Right ventricle myocardium inferior (tissue), 1 donor: ENCODE measurements at regions of chr7 and their contacts with region 1.

Region 1: GRCh38 chr7:150962553-150963399 is 15.3 kb downstream of the KCNH2 start:
- DNase-seq: peak; percentile 82
- ATAC-seq: peak; percentile 49

Region 2: GRCh38 chr7:150400008-150400787 is 562.6 kb before region 1 on chr7:
- intact Hi-C with region 1: no loop called
- DNase-seq: no peak
- ATAC-seq: no peak

Region 3: GRCh38 chr7:150876817-150877526 is 85.8 kb before region 1 on chr7:
- intact Hi-C with region 1: no loop called
- DNase-seq: no peak
- ATAC-seq: peak; percentile 91

Region 4: DNA sequence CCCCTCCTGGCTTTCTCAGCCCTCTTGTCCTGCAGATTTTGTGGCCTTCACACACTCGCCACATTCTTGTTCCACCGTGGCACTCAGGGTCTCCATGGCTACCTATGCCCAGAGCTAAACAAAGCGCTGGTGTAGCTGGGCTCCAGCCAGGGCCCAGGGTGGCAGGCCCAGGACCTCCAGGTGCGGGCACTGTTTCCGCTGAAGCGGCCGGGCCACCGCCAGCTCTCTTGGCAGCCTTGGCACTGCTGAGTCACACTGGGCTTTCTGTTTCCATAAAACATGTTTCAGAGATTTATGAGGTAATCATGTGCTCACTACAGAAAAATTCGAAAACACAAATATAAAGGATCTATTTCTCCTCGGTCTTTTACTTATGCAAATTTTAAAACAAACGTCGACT is 59.2 kb before region 1 on chr7:
- intact Hi-C with region 1: loop called (anchors 2 kb)
- DNase-seq: peak; percentile 85
- ATAC-seq: peak; percentile 91

Region 5: DNA sequence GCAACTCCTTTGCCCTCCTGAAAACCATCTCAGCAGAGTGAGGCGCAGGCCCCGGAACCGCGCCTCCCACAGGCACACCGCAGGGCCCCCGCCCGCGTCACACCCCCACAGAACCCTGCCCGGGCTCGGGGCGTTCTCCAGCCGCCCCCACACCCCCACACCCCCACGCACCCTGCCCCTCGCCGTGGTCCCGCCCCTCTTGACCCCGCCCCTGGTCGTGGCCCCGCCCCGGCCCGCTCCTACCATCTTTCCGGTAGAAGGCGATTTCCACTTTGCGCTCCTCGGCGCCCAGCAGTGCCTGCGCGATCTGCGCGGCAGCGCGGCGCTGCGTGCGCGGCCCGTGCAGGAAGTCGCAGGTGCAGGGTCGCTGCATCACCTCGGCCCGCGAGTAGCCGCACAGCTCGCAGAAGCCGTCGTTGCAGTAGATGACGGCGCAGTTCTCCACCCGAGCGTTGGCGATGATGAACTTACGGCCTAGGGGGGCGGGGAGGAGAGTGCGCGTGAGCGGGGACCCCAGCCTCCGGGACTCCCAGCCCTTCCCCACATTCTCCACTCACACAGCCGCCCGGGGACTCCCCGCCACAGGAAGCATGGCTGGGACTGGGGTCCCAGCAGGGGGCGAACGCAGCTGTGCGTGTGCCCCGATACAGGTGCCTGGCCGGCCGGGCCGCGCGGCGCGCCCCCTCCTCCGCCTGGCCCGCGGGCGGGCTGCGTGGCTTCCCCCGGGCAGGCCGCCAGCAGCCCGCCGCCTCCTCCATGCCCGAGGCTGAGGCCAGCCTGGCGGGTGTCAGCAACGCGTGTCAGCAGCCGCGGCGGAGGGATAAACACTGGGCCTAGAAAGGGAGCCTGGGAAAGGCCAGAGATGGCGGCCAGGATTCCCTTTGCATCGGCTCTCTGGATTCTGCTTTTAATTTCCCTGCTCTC is 12.0 kb after region 1 on chr7:
- intact Hi-C with region 1: loop called (anchors 1 kb)
- DNase-seq: peak; percentile 77
- ATAC-seq: no peak

Region 6: DNA sequence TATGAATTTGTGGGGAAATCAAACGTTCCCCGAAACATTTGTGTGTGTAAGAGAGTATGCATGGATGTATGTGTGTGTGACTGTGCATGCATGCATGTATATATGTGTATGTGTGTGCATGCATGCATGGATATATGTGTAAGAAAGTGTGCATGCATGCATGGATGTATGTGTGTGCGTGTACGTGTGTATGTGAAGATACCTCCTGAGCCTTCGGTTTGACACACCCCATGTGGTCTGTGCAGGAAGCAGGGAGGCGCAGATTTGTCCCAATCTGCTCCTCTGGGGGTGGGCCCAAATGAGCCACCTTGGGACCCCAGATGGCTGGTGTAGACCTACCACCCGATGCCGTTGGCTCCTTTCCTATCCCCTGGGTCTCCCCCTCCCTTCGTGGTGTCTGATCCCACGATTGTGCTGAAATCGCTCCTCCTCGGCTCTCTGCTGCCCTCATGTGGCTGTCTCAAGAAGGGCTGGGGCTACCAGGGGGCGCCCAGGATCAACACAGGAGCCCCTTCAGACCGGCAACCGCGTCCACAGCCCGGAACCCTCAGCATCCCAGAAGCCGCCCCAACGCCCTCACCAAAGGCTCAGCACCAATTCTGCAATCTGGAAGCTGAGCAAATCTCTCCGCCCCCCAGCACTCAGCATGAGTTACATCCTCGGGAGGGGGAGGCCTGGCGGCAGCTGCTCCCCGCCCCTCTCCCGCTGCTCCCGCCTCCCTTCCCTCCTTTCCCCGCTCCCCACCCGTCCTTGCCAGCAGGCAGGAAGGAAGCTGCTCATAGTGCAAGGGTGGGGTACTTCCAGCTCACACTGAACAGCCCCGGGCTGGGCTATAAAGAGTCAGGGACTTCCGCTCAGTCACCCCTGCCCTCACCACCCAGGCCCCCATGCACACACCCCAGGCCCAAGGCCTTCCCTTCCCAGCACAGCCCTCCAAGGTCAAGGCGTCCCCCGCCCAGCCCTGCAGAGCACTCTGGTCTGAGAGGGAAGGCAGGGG is 25.8 kb after region 1 on chr7:
- intact Hi-C with region 1: loop called (anchors 1 kb)
- DNase-seq: peak; percentile 78
- ATAC-seq: peak; percentile 47

Region 7: DNA sequence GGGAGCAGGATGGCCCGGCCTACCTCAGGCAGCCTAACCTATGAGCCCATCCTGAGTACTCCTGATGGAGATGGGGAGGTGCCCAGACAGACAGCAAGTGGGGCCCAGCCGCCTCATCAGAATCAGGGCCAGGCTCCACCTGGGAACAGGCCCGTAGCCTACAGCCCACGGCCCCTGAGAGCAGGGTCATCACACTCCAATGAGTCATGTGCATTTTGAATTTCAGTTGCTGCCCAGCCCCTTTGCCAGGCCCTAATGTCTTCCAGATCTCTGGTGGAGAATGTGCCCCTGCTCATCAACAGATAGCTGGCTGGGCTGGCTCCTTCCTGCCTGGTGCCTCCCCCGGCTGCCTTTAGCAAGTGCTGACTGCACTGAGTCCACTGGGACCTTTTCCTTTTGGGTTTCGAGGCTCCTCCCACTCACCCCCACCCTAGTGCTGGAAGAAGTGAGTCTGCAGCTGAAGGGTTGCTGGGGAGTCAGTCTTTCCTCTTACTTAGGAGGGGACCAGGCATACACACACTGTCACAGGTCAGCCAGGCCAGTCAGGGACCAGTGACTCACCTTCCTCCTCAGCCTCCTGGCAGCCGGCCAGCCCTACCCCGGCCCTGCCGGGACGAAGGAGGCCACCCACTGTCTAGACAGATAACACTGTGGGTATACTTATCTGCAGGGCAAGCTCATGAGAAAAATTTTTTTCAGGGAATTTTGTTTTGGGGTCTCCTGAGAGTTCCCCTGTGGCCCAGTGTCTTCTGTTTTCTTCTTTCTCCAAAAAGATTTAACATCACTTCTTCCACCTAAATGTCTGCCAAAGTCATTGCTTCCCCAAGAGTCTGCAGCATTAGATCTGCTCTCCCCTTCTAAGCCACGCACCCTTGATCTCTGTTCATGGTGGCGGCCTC is 76.4 kb after region 1 on chr7:
- intact Hi-C with region 1: no loop called
- DNase-seq: peak; percentile 74
- ATAC-seq: no peak